Psoas muscle (tissue), 8 donors: ENCODE measurements at regions of chr9 and their contacts with region 1.

Region 1: GRCh38 chr9:97598461-97599288 is 34.5 kb downstream of the TSTD2 start:
- DNase-seq: peak; percentile 66 to 81
- ATAC-seq: peak; percentile 51 to 58 (median 56)
- H3K4me3 ChIP-seq: no peak overlapping the region
- H3K27ac ChIP-seq: peak overlapping the region; percentile 77
- H3K4me1 ChIP-seq: peaks cover 75% of the 10 kb centered on the region
- H3K27me3 ChIP-seq: no peaks in the 10 kb centered on the region
- CTCF ChIP-seq: peak; percentile 83

Region 2: GRCh38 chr9:97501177-97501971 is 97.3 kb before region 1 on chr9 and contains the start of gene TMOD1:
- intact Hi-C with region 1: loop called in 1 of 2 experiments (anchors 1 kb)
- DNase-seq: peak; percentile 81 to 90
- ATAC-seq: peak; percentile 81 to 87 (median 82)
- H3K4me3 ChIP-seq: peak within 1 kb of the TSS; percentile 83
- H3K27ac ChIP-seq: peak within 1 kb of the TSS; percentile 96
- H3K4me1 ChIP-seq: peaks cover 33% of the 10 kb centered on the region
- H3K27me3 ChIP-seq: no peaks in the 10 kb centered on the region
- CTCF ChIP-seq: peak; percentile 27
- total RNA-seq, gene TMOD1: 138 to 209 (median 167) TPM

Region 3: GRCh38 chr9:97529363-97530076 is 69.2 kb before region 1 on chr9:
- intact Hi-C with region 1: loop called in 1 of 2 experiments (anchors 10 kb)
- DNase-seq: peak in 1 of 2 donors; percentile 66
- ATAC-seq: peak; percentile 58 to 79 (median 77)
- H3K4me3 ChIP-seq: no peak overlapping the region
- H3K27ac ChIP-seq: peak overlapping the region; percentile 90
- H3K4me1 ChIP-seq: peaks cover 80% of the 10 kb centered on the region
- H3K27me3 ChIP-seq: no peaks in the 10 kb centered on the region
- CTCF ChIP-seq: no peak

Region 4: GRCh38 chr9:97564291-97565175 is 34.1 kb before region 1 on chr9:
- intact Hi-C with region 1: loop called in 1 of 2 experiments (anchors 5 kb)
- DNase-seq: peak; percentile 43 to 70
- ATAC-seq: peak; percentile 43 to 64 (median 53)
- H3K4me3 ChIP-seq: no peak overlapping the region
- H3K27ac ChIP-seq: peak overlapping the region; percentile 79
- H3K4me1 ChIP-seq: peaks cover 44% of the 10 kb centered on the region
- H3K27me3 ChIP-seq: no peaks in the 10 kb centered on the region
- CTCF ChIP-seq: no peak